Mammary epithelial cell (primary cell): ENCODE measurements at regions of chr10 and their contacts with region 1.

Region 1: DNA sequence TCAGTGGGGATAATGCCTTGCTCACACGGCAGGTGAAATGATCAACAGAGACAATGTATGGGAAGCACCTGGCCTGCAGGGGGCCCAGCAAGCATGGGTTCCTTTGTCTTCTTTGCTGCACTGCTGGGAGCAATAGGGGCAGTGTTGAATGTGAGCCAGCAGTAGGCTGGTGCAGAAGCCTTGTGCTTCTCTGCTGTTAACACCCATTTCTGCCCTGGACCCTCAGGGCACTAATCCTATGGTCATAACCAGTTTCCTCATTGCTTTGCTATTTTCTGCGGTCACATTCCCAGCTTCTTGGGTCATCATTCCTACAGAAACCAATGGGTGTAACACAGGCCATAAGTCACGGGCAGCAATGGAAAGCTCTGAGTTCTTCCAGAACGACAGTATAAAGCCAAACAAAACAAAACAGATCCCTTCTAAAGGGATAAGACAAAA is 10.9 kb upstream of the LGI1 start:
- DNase-seq: peak; percentile 97
- H3K4me3 ChIP-seq: no peak overlapping the region
- H3K27ac ChIP-seq: peak overlapping the region; percentile 39
- H3K4me1 ChIP-seq: peaks cover 3% of the 10 kb centered on the region
- H3K27me3 ChIP-seq: no peaks in the 10 kb centered on the region
- CTCF ChIP-seq: peak; percentile 47 to 57

Region 2: DNA sequence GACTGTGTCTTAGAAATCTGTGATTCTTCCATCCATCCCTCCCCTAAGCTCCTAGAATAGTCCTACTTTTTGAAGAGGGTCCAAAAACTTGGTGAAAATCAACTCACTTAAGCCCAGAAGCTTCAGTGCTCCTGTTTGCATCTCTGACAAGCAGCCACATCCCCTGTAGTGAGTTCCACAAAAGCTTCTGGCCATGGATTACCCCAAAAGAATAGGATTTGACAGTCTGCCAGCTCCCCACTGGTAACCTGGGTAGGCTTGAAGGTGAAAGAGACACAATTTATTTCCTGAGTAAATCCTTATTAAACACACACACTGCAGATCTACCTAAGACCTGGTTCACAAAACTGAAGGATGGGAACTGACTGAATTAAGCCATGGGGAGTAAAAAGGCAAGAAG is 57.3 kb after region 1 on chr10:
- CTCF ChIA-PET with region 1: no interaction called
- dilution Hi-C with region 1: loop called (anchors 5 kb)
- in situ Hi-C with region 1: no loop called
- intact Hi-C with region 1: no loop called
- DNase-seq: no peak
- H3K4me3 ChIP-seq: no peak overlapping the region
- H3K27ac ChIP-seq: no peak overlapping the region
- H3K4me1 ChIP-seq: no peaks in the 10 kb centered on the region
- H3K27me3 ChIP-seq: peaks cover 3% of the 10 kb centered on the region
- CTCF ChIP-seq: no peak

Region 3: GRCh38 chr10:93838278-93838677 is 91.4 kb after region 1 on chr10:
- CTCF ChIA-PET with region 1: no interaction called
- dilution Hi-C with region 1: no loop called
- in situ Hi-C with region 1: no loop called
- intact Hi-C with region 1: no loop called
- DNase-seq: no peak
- H3K4me3 ChIP-seq: no peak overlapping the region
- H3K27ac ChIP-seq: no peak overlapping the region
- H3K4me1 ChIP-seq: no peaks in the 10 kb centered on the region
- H3K27me3 ChIP-seq: peaks cover 3% of the 10 kb centered on the region
- CTCF ChIP-seq: no peak

Region 4: GRCh38 chr10:93873427-93874115 is 126.7 kb after region 1 on chr10:
- CTCF ChIA-PET with region 1: interaction called, 14 read pairs
- dilution Hi-C with region 1: no loop called
- in situ Hi-C with region 1: no loop called
- intact Hi-C with region 1: no loop called
- DNase-seq: peak; percentile 54
- H3K4me3 ChIP-seq: no peak overlapping the region
- H3K27ac ChIP-seq: no peak overlapping the region
- H3K4me1 ChIP-seq: no peaks in the 10 kb centered on the region
- H3K27me3 ChIP-seq: no peaks in the 10 kb centered on the region
- CTCF ChIP-seq: no peak